ENCODE measurements at regions of chr14 and their contacts with region 1.

Region 1: DNA sequence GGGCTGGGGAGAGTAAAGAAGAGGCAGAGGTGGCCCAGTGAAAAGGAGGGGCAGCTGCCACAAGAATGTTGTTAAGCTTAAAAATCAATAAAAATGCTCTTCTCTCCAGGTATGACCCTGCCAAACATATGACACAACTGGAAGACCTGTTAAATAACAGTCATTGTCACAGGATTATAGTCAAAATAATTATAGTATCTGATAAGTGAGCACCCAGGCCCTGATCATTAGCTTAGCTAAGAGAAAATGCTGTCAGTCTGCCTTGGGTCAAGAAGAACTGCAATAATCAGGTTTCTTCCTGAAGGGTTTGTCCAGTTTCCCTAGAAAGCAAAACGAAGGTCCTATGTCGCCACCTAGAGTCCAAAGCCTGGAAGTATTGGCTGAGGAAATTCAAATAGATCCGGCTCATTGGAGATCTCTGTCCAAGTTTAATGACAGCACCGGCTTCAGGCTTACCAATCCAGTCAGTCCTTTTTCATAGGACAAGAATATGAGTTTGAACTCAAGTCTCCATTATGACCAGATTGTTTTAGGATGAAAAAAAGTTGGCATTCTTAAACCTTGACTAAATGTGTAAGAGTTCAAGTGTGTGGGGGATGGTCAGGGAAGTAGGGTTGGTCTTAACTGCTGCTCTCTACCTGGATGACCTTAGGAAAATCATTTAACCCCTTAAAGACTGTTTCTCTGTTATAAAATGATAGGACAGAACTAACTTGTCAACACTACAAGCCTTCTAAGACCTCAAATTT is 22.5 kb upstream of the NKX2-8 start:
- DNase-seq: no peak
- ATAC-seq: peak in 1 of 2 donors; percentile 32

Region 2: DNA sequence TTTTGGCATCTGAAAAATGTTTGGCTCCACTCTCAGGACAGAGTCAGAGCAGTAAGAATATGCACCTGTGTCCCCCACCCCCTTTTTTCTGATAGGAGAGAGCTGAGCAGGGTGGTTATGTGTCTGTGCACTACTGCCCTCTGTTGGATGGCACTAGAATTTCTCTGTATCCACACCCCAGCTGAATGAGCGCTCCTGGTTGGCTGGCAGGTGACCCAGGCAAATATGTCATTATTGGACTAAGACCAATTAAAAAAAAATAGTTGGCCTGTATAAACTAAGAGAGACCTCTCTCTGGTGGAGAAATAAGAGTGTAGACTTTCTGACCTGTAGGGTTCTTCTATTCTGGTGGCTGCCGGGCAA is 535.4 kb before region 1 on chr14:
- intact Hi-C with region 1: loop called in 1 of 2 experiments (anchors 10 kb)
- DNase-seq: no peak
- ATAC-seq: peak; percentile 71 to 77

Region 3: GRCh38 chr14:36553656-36554260 is 51.2 kb before region 1 on chr14:
- intact Hi-C with region 1: loop called in 1 of 2 experiments (anchors 10 kb)
- DNase-seq: no peak
- ATAC-seq: peak in 1 of 2 donors; percentile 51

Region 4: DNA sequence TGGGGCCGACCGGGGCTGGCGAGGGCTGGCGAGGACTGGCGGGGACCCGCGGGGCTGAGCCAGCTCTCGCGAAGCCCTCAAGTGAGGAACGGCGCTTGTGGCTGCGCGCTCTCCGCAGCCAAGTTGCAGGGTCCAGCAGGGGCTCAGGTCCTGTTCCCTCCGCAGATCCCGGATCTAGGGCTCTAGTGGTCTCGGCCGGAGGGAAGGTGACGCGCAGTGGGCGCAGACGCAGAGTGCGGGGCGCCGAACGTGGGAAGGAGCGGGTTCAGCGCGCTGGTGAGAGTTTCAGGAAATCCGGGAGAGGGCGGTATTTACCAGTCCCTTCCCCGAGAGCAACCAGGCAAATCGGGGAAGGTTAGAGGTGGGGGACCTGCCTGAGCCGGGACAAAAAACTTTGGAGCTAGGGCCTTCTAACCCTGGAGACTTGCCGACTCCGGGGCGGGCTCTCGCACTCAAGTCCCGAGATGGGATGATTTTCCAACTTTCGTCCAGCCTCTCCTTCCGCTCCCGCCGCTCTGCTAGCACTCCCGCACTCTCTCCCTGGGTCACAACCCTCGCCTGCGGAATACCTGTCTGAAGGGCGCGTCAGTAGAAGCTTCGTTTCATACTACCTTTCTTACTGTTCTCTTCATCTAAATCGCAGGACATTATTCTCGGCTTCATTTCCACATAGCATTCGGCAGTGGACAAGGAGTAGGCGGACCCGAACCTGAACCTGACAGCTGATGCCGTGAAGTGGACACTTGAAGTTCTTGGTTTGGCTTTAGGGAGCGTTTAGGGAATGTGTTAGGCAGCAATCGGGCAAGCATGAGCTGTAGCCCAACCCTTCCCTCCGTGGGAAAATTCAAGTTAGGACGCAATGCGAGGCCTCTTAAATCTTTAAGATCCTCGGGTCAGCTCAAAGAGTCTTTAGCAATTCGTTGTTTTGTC is 43.2 kb after region 1 on chr14:
- intact Hi-C with region 1: no loop called
- DNase-seq: peak; percentile 17
- ATAC-seq: peak; percentile 80 to 89

Region 5: DNA sequence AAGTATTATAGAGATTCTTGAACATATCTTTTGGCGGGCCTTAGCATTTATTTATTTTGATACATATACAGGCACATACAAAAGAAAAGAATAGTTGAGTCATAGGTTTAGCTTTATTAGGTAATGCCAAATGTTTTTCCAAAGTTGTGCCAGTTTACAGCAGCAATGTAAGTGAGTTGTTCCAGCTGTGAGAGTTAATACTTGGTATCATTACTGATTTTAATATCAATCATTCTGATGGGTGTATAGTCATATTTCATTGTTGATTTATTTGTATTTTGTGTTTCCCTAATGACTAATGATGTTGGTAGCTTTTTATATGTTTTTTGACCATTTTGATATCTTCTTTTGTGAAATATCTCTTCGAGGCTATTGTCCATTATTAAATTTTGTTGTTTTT is 715.2 kb after region 1 on chr14:
- intact Hi-C with region 1: no loop called
- DNase-seq: no peak
- ATAC-seq: no peak